Left lung (tissue), 14 donors: ENCODE measurements at regions of chr12 and their contacts with region 1.

Region 1: GRCh38 chr12:6423267-6424007 is 21.3 kb upstream of the CD27 start:
- DNase-seq: peak; percentile 80 to 92 (median 85)
- ATAC-seq: peak; percentile 99
- H3K4me3 ChIP-seq: no peak overlapping the region
- H3K27ac ChIP-seq: no peak overlapping the region
- H3K4me1 ChIP-seq: peaks cover 10 to 25% of the 10 kb centered on the region in 2 donors
- H3K27me3 ChIP-seq: no peaks in the 10 kb centered on the region
- CTCF ChIP-seq: peak; percentile 78 to 93

Region 2: GRCh38 chr12:6465467-6466183 is 42.2 kb after region 1 on chr12:
- intact Hi-C with region 1: loop called in 1 of 2 experiments (anchors 5 kb)
- DNase-seq: peak in 2 of 4 donors; percentile 67 to 73
- ATAC-seq: peak; percentile 66
- H3K4me3 ChIP-seq: no peak overlapping the region
- H3K27ac ChIP-seq: peak overlapping the region in 1 of 2 donors; percentile 41
- H3K4me1 ChIP-seq: peaks cover 12 to 78% of the 10 kb centered on the region in 2 donors
- H3K27me3 ChIP-seq: no peaks in the 10 kb centered on the region
- CTCF ChIP-seq: peak; percentile 74 to 87

Region 3: DNA sequence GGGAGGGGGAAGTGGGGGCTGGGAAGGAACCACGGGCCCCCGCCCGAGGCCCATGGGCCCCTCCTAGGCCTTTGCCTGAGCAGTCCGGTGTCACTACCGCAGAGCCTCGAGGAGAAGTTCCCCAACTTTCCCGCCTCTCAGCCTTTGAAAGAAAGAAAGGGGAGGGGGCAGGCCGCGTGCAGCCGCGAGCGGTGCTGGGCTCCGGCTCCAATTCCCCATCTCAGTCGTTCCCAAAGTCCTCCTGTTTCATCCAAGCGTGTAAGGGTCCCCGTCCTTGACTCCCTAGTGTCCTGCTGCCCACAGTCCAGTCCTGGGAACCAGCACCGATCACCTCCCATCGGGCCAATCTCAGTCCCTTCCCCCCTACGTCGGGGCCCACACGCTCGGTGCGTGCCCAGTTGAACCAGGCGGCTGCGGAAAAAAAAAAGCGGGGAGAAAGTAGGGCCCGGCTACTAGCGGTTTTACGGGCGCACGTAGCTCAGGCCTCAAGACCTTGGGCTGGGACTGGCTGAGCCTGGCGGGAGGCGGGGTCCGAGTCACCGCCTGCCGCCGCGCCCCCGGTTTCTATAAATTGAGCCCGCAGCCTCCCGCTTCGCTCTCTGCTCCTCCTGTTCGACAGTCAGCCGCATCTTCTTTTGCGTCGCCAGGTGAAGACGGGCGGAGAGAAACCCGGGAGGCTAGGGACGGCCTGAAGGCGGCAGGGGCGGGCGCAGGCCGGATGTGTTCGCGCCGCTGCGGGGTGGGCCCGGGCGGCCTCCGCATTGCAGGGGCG is 110.7 kb after region 1 on chr12 and contains the start of gene GAPDH:
- intact Hi-C with region 1: loop called in 1 of 2 experiments (anchors 10 kb)
- DNase-seq: peak; percentile 95 to 97 (median 96)
- ATAC-seq: peak; percentile 82
- H3K4me3 ChIP-seq: peak within 1 kb of the TSS; percentile 99
- H3K27ac ChIP-seq: peak within 1 kb of the TSS; percentile 97 to 99
- H3K4me1 ChIP-seq: peaks cover 17 to 58% of the 10 kb centered on the region in 2 donors
- H3K27me3 ChIP-seq: no peaks in the 10 kb centered on the region
- CTCF ChIP-seq: no peak
- polyA plus RNA-seq, gene GAPDH: 1,473 to 1,774 (median 1,660) TPM

Region 4: DNA sequence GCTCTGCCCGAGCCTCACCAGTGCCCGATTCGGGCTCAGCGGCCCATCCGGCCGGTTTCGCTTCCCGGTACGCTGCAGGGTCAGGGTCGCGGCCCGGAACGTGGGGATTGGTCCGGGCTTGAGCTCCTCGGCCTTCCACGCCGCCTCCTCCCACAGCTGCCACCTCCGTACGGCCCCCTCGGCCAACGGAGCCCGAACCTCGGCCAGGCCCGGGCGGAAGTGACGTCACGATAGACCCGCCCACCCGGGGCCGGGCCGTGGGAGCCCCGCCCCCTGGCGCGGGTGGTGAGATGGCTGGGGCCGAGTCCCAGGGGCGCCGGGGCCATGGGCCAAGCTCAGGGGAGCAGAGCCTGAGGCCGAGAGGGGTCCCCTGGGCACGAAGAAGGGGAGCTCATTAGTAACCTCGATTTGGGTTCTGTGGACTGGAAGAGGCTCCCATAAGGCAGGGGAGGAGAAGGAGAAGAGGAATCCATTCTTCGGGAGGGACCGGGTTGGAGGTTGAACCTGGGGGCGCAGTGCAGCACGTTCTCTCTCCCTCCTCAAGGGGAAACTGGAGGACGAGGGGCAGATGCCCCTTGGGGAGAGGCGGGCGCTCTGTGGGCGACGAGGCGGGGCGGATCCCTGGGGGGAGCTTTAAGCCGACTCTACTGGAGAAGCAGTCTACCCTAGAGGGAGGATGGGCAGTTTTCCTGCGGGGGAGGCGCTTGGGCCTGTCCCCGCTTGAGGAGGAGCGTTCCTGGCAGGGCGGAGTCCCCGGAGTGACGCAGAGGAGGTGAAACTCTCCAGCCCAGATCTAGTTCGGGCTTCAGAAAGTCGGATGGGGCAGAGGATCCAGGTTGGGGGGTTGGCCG is 329.7 kb after region 1 on chr12 and contains the start of gene MLF2:
- intact Hi-C with region 1: no loop called
- DNase-seq: peak; percentile 99 to 100 (median 99)
- ATAC-seq: peak; percentile 95
- H3K4me3 ChIP-seq: peak within 1 kb of the TSS; percentile 94 to 98
- H3K27ac ChIP-seq: peak within 1 kb of the TSS; percentile 98 to 99
- H3K4me1 ChIP-seq: peaks cover 10 to 36% of the 10 kb centered on the region in 2 donors
- H3K27me3 ChIP-seq: no peaks in the 10 kb centered on the region
- CTCF ChIP-seq: peak; percentile 96 to 98
- polyA plus RNA-seq, gene MLF2: 151 to 182 (median 167) TPM